ENCODE measurements at regions of chr9 and their contacts with region 1.

Region 1: DNA sequence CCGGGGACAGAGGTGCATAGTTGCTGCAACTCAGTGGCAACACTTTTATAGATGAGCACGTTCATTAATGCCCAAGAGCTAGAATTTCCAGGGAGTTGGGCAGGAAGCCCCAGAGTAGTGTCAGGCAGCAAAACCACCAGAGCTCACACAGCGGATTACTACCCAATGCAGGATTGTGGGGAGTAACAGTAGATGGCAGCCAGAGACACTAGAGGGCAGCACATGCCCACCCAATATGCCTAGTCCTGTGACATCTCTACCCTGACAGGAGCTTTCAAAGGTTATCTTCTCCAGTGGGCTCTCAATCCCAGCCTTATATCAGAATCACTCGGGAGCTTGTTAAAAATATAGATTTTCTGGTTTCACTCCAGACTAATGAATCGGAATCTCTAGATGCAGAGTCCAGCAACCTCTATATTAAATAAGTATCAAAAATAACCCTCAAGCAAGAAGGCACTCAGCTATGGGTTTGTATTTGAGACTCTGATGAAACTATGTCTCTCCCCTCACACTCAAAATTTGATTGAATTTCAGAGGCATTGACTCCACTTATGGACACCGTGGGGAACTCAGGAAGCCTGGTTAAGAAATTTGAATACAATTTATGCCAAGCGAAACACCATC is 58.4 kb upstream of the PHF24 start:
- DNase-seq: peak; percentile 73 to 75
- ATAC-seq: peak; percentile 99 to 100
- H3K4me3 ChIP-seq: no peak overlapping the region
- H3K27ac ChIP-seq: no peak overlapping the region
- H3K4me1 ChIP-seq: no peaks in the 10 kb centered on the region
- CTCF ChIP-seq: peak; percentile 89
- EP300 ChIP-seq: no peak
- POLR2A ChIP-seq: no peak
- RAD21 ChIP-seq: peak; percentile 90 to 93

Region 2: DNA sequence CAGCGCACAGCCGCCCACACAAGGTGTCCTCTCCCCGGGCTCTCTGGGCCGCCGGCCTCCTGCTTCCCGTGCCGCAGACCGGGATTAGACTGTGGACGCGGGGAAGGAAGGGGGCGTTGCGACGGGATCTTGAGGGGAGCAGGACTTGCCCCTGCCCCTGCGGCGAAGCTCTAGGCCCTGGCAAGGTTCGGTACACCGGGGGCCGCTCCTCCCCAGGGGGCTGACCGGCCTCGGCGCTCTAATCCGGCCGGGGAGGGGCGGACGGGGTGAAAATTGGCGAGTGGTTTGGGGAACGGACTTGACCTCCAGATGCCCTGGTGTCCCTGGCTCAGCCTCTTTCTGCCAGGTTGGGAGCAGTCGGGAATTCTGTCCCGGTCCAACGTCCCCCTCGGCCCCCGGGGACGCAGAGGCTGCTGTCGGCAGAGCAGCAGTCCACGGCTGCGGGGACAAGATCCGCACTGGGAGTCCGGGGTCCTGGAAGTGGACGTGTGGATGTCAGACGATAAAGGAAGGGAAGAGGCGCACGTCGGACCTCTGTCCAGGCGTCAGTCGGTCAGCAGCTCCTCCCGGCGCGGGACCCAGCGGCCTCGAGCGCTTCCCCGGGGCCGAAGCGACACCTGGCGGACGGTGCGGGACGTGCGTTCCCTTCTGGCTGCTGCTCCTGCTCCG is 308.3 kb before region 1 on chr9:
- CTCF ChIA-PET with region 1: no interaction called
- POLR2A ChIA-PET with region 1: no interaction called
- DNase-seq: peak; percentile 84 to 91
- ATAC-seq: peak; percentile 84 to 95
- H3K4me3 ChIP-seq: no peak overlapping the region
- H3K27ac ChIP-seq: no peak overlapping the region
- H3K4me1 ChIP-seq: peaks cover 7% of the 10 kb centered on the region; the same call in 2 of the 3 replicates
- CTCF ChIP-seq: peak; percentile 81
- EP300 ChIP-seq: no peak
- POLR2A ChIP-seq: no peak
- RAD21 ChIP-seq: peak; percentile 89 to 94

Region 3: GRCh38 chr9:34876096-34876495 is 23.6 kb before region 1 on chr9:
- CTCF ChIA-PET with region 1: interaction called, 14 read pairs
- POLR2A ChIA-PET with region 1: no interaction called
- DNase-seq: no peak
- ATAC-seq: no peak
- H3K4me3 ChIP-seq: no peak overlapping the region
- H3K27ac ChIP-seq: no peak overlapping the region
- H3K4me1 ChIP-seq: no peaks in the 10 kb centered on the region
- CTCF ChIP-seq: no peak
- EP300 ChIP-seq: no peak
- POLR2A ChIP-seq: no peak
- RAD21 ChIP-seq: no peak

Region 4: GRCh38 chr9:34957492-34958410 is 58.1 kb after region 1 on chr9 and contains the start of gene PHF24:
- CTCF ChIA-PET with region 1: interaction called, 17 read pairs
- POLR2A ChIA-PET with region 1: no interaction called
- DNase-seq: no peak
- ATAC-seq: peak; percentile 76 to 80
- H3K4me3 ChIP-seq: peak within 1 kb of the TSS; percentile 55
- H3K27ac ChIP-seq: peak within 1 kb of the TSS in 1 of 2 experiments; percentile 74; a peak in 4 of 6 replicates
- H3K4me1 ChIP-seq: peaks cover 4% of the 10 kb centered on the region; the same call in 1 of the 3 replicates
- CTCF ChIP-seq: no peak
- EP300 ChIP-seq: no peak
- POLR2A ChIP-seq: no peak
- RAD21 ChIP-seq: no peak
- polyA plus RNA-seq, gene PHF24: 0.01 TPM in 1 of 2 replicates, not detected in the other

Region 5: GRCh38 chr9:34980181-34980761 is 80.6 kb after region 1 on chr9:
- CTCF ChIA-PET with region 1: interaction called, 114 read pairs
- POLR2A ChIA-PET with region 1: interaction called, 8 read pairs
- DNase-seq: no peak
- ATAC-seq: no peak
- H3K4me3 ChIP-seq: no peak overlapping the region
- H3K27ac ChIP-seq: no peak overlapping the region
- H3K4me1 ChIP-seq: no peaks in the 10 kb centered on the region
- CTCF ChIP-seq: no peak
- EP300 ChIP-seq: no peak
- POLR2A ChIP-seq: no peak
- RAD21 ChIP-seq: no peak

Region 6: GRCh38 chr9:35042081-35042604 is 142.5 kb after region 1 on chr9:
- CTCF ChIA-PET with region 1: interaction called, 19 read pairs
- POLR2A ChIA-PET with region 1: no interaction called
- DNase-seq: no peak
- ATAC-seq: peak in 1 of 2 experiments; percentile 6; a peak in 2 of 6 replicates
- H3K4me3 ChIP-seq: no peak overlapping the region
- H3K27ac ChIP-seq: no peak overlapping the region
- H3K4me1 ChIP-seq: peaks cover 7% of the 10 kb centered on the region; the same call in 2 of the 3 replicates
- CTCF ChIP-seq: no peak
- EP300 ChIP-seq: no peak
- POLR2A ChIP-seq: no peak
- RAD21 ChIP-seq: no peak

Region 7: GRCh38 chr9:35079426-35080341 is 180.0 kb after region 1 on chr9 and contains the start of gene FANCG:
- CTCF ChIA-PET with region 1: interaction called, 16 read pairs
- POLR2A ChIA-PET with region 1: no interaction called
- DNase-seq: peak; percentile 94 to 95
- ATAC-seq: peak; percentile 96
- H3K4me3 ChIP-seq: peak within 1 kb of the TSS; percentile 71
- H3K27ac ChIP-seq: peak within 1 kb of the TSS; percentile 86 to 96
- H3K4me1 ChIP-seq: peaks cover 14% of the 10 kb centered on the region; the same call in 2 of the 3 replicates
- CTCF ChIP-seq: no peak
- EP300 ChIP-seq: no peak
- POLR2A ChIP-seq: peak; percentile 88
- RAD21 ChIP-seq: no peak
- polyA plus RNA-seq, gene FANCG: 34.9 and 39.7 TPM in 2 replicates

Region 8: DNA sequence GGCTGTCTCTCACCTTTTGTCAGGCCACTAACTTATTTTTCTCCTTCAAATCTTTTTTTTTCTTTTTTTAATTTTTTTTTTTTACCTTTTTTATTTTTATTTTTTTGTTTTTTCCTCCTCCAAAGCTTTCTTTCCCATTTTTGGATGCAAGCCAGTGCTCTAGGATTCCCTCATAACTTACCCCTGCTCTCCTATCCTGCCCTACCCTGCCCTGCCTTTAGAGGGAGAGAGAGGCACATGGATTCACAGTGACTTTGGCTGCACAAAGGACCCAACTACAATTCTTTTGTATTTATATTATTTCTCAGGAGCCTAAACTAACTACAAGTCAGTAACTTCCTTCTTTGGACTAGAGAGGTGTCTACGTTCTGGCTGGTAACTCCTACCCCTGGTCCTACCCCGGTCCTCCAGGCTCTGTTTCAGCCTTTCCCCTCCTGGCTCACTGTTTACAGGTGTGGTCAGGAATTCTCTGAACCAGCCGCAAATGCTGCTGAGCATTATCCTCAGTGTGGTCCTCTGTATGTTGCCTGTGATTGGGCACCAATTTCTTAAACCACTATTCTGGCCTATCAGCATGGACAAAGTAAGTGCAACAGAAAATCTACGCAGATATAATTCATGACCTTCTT is 581.8 kb after region 1 on chr9:
- CTCF ChIA-PET with region 1: interaction called, 39 read pairs
- POLR2A ChIA-PET with region 1: no interaction called
- DNase-seq: peak; percentile 74 to 75
- ATAC-seq: peak; percentile 73 to 80; a peak in 4 of 6 replicates
- H3K4me3 ChIP-seq: no peak overlapping the region
- H3K27ac ChIP-seq: peak overlapping the region; percentile 21 to 68
- H3K4me1 ChIP-seq: peaks cover 31% of the 10 kb centered on the region
- CTCF ChIP-seq: peak; percentile 77
- EP300 ChIP-seq: no peak
- POLR2A ChIP-seq: no peak
- RAD21 ChIP-seq: peak; percentile 88 to 95

Region 9: GRCh38 chr9:35611230-35611797 is 711.7 kb after region 1 on chr9:
- CTCF ChIA-PET with region 1: no interaction called
- POLR2A ChIA-PET with region 1: no interaction called
- DNase-seq: peak; percentile 53 to 64
- ATAC-seq: peak; percentile 74 to 87
- H3K4me3 ChIP-seq: no peak overlapping the region
- H3K27ac ChIP-seq: no peak overlapping the region
- H3K4me1 ChIP-seq: peaks cover 8% of the 10 kb centered on the region
- CTCF ChIP-seq: peak; percentile 61
- EP300 ChIP-seq: no peak
- POLR2A ChIP-seq: no peak
- RAD21 ChIP-seq: peak in 1 of 2 experiments; percentile 35; a peak in 1 of 5 replicates